Activated naive CD4-positive, alpha-beta T cell treated with anti-CD3 and anti-CD28 coated beads for 36 hours (primary cell): ENCODE measurements at regions of chr12 and their contacts with region 1.

Region 1: GRCh38 chr12:111396726-111397445 is 8.8 kb upstream of the SH2B3 start:
- DNase-seq: peak; percentile 88
- H3K4me3 Mint-ChIP-seq: peak overlapping the region; percentile 65
- H3K27ac Mint-ChIP-seq: no peak overlapping the region
- H3K4me1 Mint-ChIP-seq: peaks cover 36% of the 10 kb centered on the region
- H3K27me3 Mint-ChIP-seq: no peaks in the 10 kb centered on the region

Region 2: DNA sequence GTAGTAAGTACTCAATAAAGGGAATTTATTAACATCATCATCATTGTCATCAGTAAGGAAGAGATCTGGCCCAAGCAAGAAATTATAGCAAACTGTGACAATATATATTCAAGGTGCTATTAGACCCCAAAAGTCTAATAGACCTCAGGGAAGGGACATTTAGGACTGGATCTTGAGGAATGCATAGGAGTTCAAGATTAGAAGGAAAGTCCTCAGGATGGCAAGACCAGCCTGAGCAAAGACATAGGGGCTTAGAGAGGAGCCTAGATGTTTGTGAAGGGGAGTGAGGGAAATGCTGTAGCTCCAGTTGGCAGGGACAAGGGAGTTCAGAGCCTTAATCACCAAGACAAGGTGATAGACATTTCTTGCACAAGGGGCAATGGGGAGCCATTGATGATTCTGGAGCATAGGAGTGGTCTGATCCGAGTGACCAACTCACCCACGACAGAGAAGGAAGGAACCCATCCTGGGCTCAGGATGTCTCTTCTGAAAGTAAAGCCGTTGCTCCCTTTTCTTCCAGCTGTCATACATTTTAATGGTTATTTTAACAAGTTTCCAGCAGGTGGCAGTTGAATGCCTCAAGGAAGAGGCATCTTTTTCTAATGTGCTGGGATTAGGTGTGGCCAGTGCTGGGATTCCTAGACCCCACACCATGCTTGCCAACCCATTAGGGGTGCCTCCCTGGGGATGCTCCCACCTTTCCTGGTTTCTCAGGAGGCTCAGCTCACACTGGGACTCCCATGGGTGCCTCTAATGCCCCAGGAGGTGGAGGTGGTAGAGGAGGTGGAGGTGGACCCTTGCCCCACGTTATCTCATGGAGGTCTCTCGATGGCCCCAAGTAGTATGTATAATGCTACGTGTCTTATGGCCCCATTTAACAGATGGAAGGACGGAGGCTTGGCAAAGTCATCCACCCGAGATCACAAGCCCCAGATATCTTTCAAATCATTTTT is 65.8 kb before region 1 on chr12:
- CTCF ChIA-PET with region 1: interaction called, 4 read pairs
- intact Hi-C with region 1: loop called (anchors 1 kb)
- DNase-seq: no peak
- H3K4me3 Mint-ChIP-seq: no peak overlapping the region
- H3K27ac Mint-ChIP-seq: no peak overlapping the region
- H3K4me1 Mint-ChIP-seq: peaks cover 3% of the 10 kb centered on the region
- H3K27me3 Mint-ChIP-seq: no peaks in the 10 kb centered on the region

Region 3: DNA sequence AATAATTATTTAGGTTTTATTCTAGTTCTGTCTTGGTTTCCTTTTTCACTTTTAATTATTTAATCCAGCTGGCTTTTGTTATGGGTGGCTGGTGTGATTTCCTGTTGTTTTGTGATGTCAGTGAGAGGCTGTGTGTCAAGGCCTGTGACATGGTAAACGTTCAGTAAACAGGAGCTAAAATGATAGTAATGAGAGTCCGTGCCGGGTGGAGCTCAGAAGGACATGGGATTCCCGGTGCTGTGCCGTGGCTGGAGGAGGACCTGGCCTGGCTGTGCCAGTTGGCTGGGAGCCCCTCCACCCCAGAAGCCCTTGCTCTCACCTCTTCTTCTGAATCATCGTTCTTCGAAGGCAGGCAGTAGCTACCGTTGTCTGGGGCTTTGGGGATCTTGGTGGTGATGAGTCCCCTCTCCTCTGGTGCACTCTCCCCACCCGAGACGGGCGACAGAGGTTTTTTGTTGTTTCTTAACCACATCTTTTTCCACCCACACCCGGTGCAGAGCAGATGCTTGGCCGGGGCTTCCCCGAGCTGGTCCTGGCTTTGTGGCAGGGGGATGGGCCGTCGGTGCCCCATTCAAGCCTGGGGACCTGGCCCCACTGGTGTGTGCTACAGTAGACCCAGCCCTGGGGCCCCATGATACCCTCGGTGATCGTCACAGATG is 37.9 kb after region 1 on chr12:
- CTCF ChIA-PET with region 1: interaction called, 763 read pairs
- intact Hi-C with region 1: no loop called
- DNase-seq: peak; percentile 89
- H3K4me3 Mint-ChIP-seq: peak overlapping the region; percentile 56
- H3K27ac Mint-ChIP-seq: peak overlapping the region; percentile 92
- H3K4me1 Mint-ChIP-seq: peaks cover 91% of the 10 kb centered on the region
- H3K27me3 Mint-ChIP-seq: no peaks in the 10 kb centered on the region

Region 4: DNA sequence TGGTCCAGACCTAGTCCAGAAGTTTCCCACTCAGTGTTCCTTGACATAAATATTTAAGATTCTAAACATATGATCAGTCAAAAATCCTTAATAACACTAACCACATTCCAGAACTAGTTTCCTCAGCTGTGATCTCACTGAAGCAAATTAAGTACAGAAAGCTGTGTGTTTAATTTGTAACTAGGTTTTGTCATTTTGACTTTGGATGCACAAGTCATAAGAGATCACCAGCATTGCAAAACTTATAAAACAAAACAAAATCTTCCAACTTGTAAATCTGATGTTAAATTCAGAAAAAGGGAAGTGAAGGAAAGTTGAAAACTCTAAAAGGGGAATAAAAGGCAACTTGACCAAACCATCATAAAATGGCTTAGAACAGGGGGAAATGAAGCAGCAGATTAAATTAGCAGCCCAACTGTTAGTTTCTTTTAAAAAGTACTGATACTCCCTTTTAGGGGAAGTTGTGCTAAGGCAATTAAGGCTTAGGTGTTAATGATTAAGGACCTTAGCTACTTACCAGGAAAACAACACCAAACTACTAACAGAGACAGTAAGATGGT is 65.4 kb after region 1 on chr12:
- CTCF ChIA-PET with region 1: interaction called, 763 read pairs
- intact Hi-C with region 1: no loop called
- DNase-seq: no peak
- H3K4me3 Mint-ChIP-seq: no peak overlapping the region
- H3K27ac Mint-ChIP-seq: no peak overlapping the region
- H3K4me1 Mint-ChIP-seq: peaks cover 1% of the 10 kb centered on the region
- H3K27me3 Mint-ChIP-seq: no peaks in the 10 kb centered on the region

Region 5: GRCh38 chr12:111529424-111530368 is 132.8 kb after region 1 on chr12:
- CTCF ChIA-PET with region 1: interaction called, 62 read pairs
- intact Hi-C with region 1: loop called (anchors 1 kb)
- DNase-seq: peak; percentile 77
- H3K4me3 Mint-ChIP-seq: no peak overlapping the region
- H3K27ac Mint-ChIP-seq: no peak overlapping the region
- H3K4me1 Mint-ChIP-seq: peaks cover 11% of the 10 kb centered on the region
- H3K27me3 Mint-ChIP-seq: no peaks in the 10 kb centered on the region

Region 6: GRCh38 chr12:111812881-111813741 is 416.2 kb after region 1 on chr12:
- CTCF ChIA-PET with region 1: interaction called, 8 read pairs
- intact Hi-C with region 1: loop called (anchors 1 kb)
- DNase-seq: peak; percentile 82
- H3K4me3 Mint-ChIP-seq: no peak overlapping the region
- H3K27ac Mint-ChIP-seq: no peak overlapping the region
- H3K4me1 Mint-ChIP-seq: peaks cover 6% of the 10 kb centered on the region
- H3K27me3 Mint-ChIP-seq: no peaks in the 10 kb centered on the region